Pancreas (tissue), 10 donors: ENCODE measurements at regions of chr7 and their contacts with region 1.

Region 1: GRCh38 chr7:50475340-50475739 is 25.2 kb upstream of the FIGNL1 start:
- DNase-seq: no peak
- ATAC-seq: peak in 2 of 4 donors; percentile 62 to 66
- H3K4me3 ChIP-seq: no peak overlapping the region
- H3K27ac ChIP-seq: no peak overlapping the region
- H3K4me1 ChIP-seq: peaks cover 0 to 6% (median 0%) of the 10 kb centered on the region in 3 donors
- H3K27me3 ChIP-seq: no peaks in the 10 kb centered on the region
- CTCF ChIP-seq: no peak

Region 2: DNA sequence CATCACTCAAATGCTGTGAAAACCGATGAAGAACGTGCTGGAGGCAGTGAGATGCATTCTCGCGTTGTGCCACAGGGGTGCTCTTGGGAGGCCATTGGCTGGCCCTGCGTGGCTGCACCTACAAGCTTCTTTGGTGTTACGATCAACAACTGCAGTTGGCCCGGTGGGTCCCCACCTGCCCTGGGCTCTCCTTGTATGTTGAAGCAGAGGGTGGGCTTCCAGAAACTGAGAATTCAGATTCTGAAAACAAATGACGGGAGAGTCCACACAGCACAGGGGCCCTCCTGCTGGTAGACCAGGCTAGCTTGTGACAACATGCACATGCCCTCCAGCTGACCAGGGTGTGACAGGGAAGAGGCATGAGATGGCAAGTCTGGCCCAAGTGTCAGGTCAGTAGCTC is 113.6 kb after region 1 on chr7:
- intact Hi-C with region 1: loop called in 2 of 3 experiments (anchors 10 kb)
- DNase-seq: no peak
- ATAC-seq: peak in 3 of 4 donors; percentile 23 to 56 (median 31)
- H3K4me3 ChIP-seq: no peak overlapping the region
- H3K27ac ChIP-seq: no peak overlapping the region
- H3K4me1 ChIP-seq: no peaks in the 10 kb centered on the region
- H3K27me3 ChIP-seq: no peaks in the 10 kb centered on the region
- CTCF ChIP-seq: no peak

Region 3: GRCh38 chr7:50595491-50596102 is 120.3 kb after region 1 on chr7:
- intact Hi-C with region 1: loop called in 1 of 3 experiments (anchors 10 kb)
- DNase-seq: no peak
- ATAC-seq: peak in 3 of 4 donors; percentile 46 to 62 (median 47)
- H3K4me3 ChIP-seq: no peak overlapping the region
- H3K27ac ChIP-seq: no peak overlapping the region
- H3K4me1 ChIP-seq: no peaks in the 10 kb centered on the region
- H3K27me3 ChIP-seq: no peaks in the 10 kb centered on the region
- CTCF ChIP-seq: no peak

Region 4: GRCh38 chr7:50679218-50680007 is 204.1 kb after region 1 on chr7:
- intact Hi-C with region 1: loop called in 1 of 3 experiments (anchors 10 kb)
- DNase-seq: no peak
- ATAC-seq: peak; percentile 15 to 43 (median 39)
- H3K4me3 ChIP-seq: no peak overlapping the region
- H3K27ac ChIP-seq: peak overlapping the region in 3 of 4 donors; percentile 8 to 60 (median 53)
- H3K4me1 ChIP-seq: peaks cover 42 to 81% (median 56%) of the 10 kb centered on the region in 3 donors
- H3K27me3 ChIP-seq: no peaks in the 10 kb centered on the region
- CTCF ChIP-seq: peak in 1 of 4 donors; percentile 10

Region 5: DNA sequence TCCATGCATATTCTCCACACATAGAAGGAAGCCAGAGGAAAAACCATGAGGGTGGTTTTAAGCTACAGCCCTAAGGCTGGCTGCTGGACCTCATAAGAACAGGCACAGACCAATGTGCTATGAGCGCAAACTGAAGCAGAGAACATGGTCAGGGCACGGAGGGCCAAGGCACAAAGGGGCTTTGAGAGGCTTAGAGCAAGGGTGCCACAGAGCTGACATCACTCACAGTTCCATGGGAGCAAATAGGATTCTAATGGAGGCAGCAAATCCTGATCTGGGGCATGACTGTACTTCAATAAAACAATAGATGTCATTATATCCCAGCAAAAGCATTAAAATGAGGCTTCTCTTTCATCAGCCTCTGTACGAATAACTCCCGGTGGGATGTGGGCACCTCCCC is 678.9 kb after region 1 on chr7:
- intact Hi-C with region 1: loop called in 1 of 3 experiments (anchors 5 kb)
- DNase-seq: no peak
- ATAC-seq: no peak
- H3K4me3 ChIP-seq: no peak overlapping the region
- H3K27ac ChIP-seq: no peak overlapping the region
- H3K4me1 ChIP-seq: no peaks in the 10 kb centered on the region
- H3K27me3 ChIP-seq: no peaks in the 10 kb centered on the region
- CTCF ChIP-seq: no peak